ENCODE measurements at regions of chr3 and their contacts with region 1.

Region 1: GRCh38 chr3:51670823-51671733 is at the start of gene TEX264:
- DNase-seq: peak; percentile 97
- H3K4me3 ChIP-seq: peak within 1 kb of the TSS; percentile 85 to 96
- H3K27ac ChIP-seq: peak within 1 kb of the TSS; percentile 73 to 94
- H3K4me1 ChIP-seq: peaks cover 10 to 22% of the 10 kb centered on the region in 2 experiments; a peak in 3 of 4 replicates
- H3K27me3 ChIP-seq: no peaks in the 10 kb centered on the region
- CTCF ChIP-seq: no peak
- EP300 ChIP-seq: no peak
- RAD21 ChIP-seq: no peak
- polyA plus RNA-seq, gene TEX264: 82.1 and 86.0 TPM in 2 replicates

Region 2: DNA sequence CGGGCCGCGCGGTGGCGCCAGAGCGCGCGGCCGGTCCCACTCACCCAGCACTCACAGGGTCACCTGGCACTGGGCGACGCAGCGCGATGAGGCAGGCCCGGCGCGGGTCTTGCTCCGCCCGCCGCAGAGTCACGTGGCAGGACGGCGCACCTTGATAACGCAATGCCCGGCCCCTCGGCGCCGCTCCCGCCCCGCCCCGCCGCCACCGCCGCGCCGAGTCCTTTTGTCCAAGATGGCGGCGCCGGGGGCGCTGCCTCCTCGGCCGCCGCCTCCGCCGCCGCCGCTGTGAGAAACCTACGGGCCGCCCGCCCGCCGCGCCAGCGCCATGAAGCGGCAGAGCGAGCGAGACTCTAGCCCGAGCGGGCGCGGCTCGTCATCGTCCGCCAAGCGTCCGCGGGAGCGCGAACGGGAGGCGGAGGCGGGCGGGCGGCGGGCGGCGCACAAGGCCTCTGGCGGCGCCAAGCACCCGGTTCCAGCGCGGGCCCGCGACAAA is 280.0 kb before region 1 on chr3 and contains the start of gene RBM15B:
- CTCF ChIA-PET with region 1: interaction called, 14 read pairs
- POLR2A ChIA-PET with region 1: interaction called, 3 read pairs
- DNase-seq: peak; percentile 98
- H3K4me3 ChIP-seq: peak within 1 kb of the TSS; percentile 76 to 89
- H3K27ac ChIP-seq: peak within 1 kb of the TSS; percentile 53 to 81
- H3K4me1 ChIP-seq: peaks cover 27 to 76% of the 10 kb centered on the region in 2 experiments
- H3K27me3 ChIP-seq: no peaks in the 10 kb centered on the region
- CTCF ChIP-seq: no peak; the same call in 1 of the 2 replicates
- EP300 ChIP-seq: peak in 1 of 2 experiments; percentile 8; a peak in 1 of 4 replicates
- RAD21 ChIP-seq: peak; percentile 54
- polyA plus RNA-seq, gene RBM15B: 11.3 and 17.0 TPM in 2 replicates

Region 3: GRCh38 chr3:51519848-51520247 is 151.2 kb before region 1 on chr3:
- CTCF ChIA-PET with region 1: interaction called, 12 read pairs
- POLR2A ChIA-PET with region 1: no interaction called
- DNase-seq: no peak
- H3K4me3 ChIP-seq: no peak overlapping the region
- H3K27ac ChIP-seq: no peak overlapping the region
- H3K4me1 ChIP-seq: no peaks in the 10 kb centered on the region
- H3K27me3 ChIP-seq: no peaks in the 10 kb centered on the region
- CTCF ChIP-seq: no peak
- EP300 ChIP-seq: no peak
- RAD21 ChIP-seq: no peak

Region 4: GRCh38 chr3:51637941-51638471 is 33.1 kb before region 1 on chr3:
- CTCF ChIA-PET with region 1: interaction called, 24 read pairs
- POLR2A ChIA-PET with region 1: no interaction called
- DNase-seq: peak; percentile 68
- H3K4me3 ChIP-seq: no peak overlapping the region; a peak in 1 of 4 replicates
- H3K27ac ChIP-seq: no peak overlapping the region
- H3K4me1 ChIP-seq: no peaks in the 10 kb centered on the region
- H3K27me3 ChIP-seq: no peaks in the 10 kb centered on the region
- CTCF ChIP-seq: peak; percentile 85
- EP300 ChIP-seq: no peak
- RAD21 ChIP-seq: peak; percentile 88

Region 5: DNA sequence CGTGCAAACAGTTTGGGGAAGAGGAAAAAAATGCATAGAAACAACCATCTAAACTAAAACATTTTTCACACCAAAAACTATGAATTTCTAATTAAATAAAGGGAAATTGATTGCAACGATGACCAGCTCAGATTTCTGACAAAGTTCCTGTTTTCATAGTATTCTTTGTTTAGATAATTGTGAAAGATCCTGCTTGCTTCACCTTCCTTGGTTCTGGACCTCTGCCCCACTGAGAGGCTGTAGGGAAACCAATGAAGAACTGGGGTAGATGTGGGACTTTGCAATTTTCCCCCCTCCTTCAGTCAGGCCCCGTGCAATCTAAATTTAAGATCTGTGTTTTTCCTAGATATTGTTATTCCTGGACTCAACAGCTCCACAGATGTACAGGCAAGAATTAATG is 13.8 kb before region 1 on chr3:
- CTCF ChIA-PET with region 1: interaction called, 47 read pairs
- POLR2A ChIA-PET with region 1: no interaction called
- DNase-seq: no peak
- H3K4me3 ChIP-seq: no peak overlapping the region
- H3K27ac ChIP-seq: no peak overlapping the region
- H3K4me1 ChIP-seq: no peaks in the 10 kb centered on the region
- H3K27me3 ChIP-seq: no peaks in the 10 kb centered on the region
- CTCF ChIP-seq: no peak
- EP300 ChIP-seq: no peak
- RAD21 ChIP-seq: no peak

Region 6: DNA sequence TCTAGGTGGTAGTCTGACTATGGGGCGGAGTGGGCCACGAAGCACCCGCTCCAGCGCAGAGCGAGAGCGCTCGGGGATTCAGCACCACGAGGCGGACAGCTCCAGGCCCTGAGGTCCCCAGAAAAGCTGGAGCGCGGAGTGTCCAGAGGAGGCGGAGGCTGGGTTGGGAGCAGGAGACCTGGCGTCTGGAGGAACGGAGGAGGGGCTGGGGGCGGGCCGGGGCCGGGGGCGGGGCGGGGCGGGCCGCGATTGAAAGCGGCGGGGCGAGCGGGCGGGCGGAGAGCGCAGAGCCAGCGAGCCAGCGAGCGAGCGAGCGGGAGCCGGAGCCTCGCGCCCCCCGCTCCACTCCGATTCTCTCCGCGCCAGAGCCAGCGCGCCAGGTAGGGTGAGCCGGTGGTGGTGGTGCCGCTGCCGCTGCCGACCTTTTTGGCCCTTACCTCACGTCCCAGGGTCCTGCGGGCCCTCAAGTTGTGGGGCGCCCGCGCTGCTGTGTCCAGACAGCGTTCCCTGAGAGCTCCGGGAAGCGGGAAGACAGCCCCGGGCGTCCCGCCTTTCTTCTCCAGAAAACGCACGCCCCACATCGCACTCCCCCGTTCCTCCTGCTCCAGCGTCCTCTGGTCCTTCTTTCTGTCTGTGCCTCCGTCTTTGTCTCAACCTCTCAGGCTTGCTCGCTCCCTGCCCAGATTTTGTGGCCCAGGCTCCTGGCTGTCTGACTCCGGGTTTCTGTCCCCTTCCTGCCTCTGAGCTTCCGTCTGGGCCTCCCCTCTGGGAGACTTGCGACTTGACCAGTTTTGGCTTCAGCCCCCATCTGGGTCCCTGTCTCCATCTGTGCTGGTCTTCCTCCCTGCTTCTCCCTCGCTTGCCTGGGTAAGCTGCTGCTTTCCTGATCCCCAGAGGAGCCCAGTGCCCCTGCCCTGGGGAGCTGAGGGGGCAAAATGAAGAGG is 36.0 kb after region 1 on chr3 and contains the start of gene GRM2:
- CTCF ChIA-PET with region 1: interaction called, 13 read pairs
- POLR2A ChIA-PET with region 1: no interaction called
- DNase-seq: peak; percentile 97
- H3K4me3 ChIP-seq: peak within 1 kb of the TSS in 1 of 2 experiments; percentile 43; a peak in 3 of 4 replicates
- H3K27ac ChIP-seq: no peak within 1 kb of the TSS
- H3K4me1 ChIP-seq: peaks cover 0 to 28% of the 10 kb centered on the region in 2 experiments; a peak in 1 of 4 replicates
- H3K27me3 ChIP-seq: no peaks in the 10 kb centered on the region
- CTCF ChIP-seq: no peak
- EP300 ChIP-seq: no peak
- RAD21 ChIP-seq: no peak
- polyA plus RNA-seq, gene GRM2: 0.15 and 0.24 TPM in 2 replicates

Region 7: GRCh38 chr3:51845129-51845528 is 174.1 kb after region 1 on chr3:
- CTCF ChIA-PET with region 1: no interaction called
- POLR2A ChIA-PET with region 1: no interaction called
- DNase-seq: no peak
- H3K4me3 ChIP-seq: no peak overlapping the region
- H3K27ac ChIP-seq: no peak overlapping the region
- H3K4me1 ChIP-seq: no peaks in the 10 kb centered on the region
- H3K27me3 ChIP-seq: no peaks in the 10 kb centered on the region
- CTCF ChIP-seq: no peak
- EP300 ChIP-seq: no peak
- RAD21 ChIP-seq: no peak

Region 8: DNA sequence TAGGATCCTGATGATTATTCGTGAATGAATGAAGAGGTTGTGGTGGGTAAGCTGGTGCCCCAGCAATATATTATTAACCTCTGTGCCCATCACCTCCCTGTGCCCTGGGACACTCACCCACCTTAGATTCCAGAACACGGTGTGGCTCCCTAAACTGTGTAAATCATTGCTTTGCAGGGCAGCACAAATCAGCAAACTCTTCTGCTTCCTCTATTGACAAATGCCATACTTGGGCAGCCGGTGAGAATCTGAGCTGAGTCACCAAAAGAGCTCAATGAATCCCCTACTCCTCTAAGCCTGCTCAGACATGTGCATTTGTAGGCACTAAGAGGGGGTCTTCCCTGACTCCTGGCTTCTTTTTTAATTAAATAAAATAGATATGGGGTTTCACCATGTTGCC is 881.0 kb after region 1 on chr3:
- CTCF ChIA-PET with region 1: no interaction called
- POLR2A ChIA-PET with region 1: no interaction called
- DNase-seq: no peak
- H3K4me3 ChIP-seq: no peak overlapping the region
- H3K27ac ChIP-seq: no peak overlapping the region
- H3K4me1 ChIP-seq: peaks cover 0 to 7% of the 10 kb centered on the region in 2 experiments; a peak in 2 of 4 replicates
- H3K27me3 ChIP-seq: no peaks in the 10 kb centered on the region
- CTCF ChIP-seq: no peak
- EP300 ChIP-seq: no peak
- RAD21 ChIP-seq: no peak